ENCODE measurements at regions of chr2 and their contacts with region 1.

Region 1: GRCh38 chr2:214226061-214226460 is 184.8 kb upstream of the VWC2L start:
- DNase-seq: no peak
- ATAC-seq: no peak
- H3K4me3 ChIP-seq: no peak overlapping the region
- H3K27ac ChIP-seq: no peak overlapping the region
- H3K4me1 ChIP-seq: no peaks in the 10 kb centered on the region
- H3K27me3 ChIP-seq: no peaks in the 10 kb centered on the region
- CTCF ChIP-seq: no peak
- EP300 ChIP-seq: no peak
- POLR2A ChIP-seq: no peak
- RAD21 ChIP-seq: no peak

Region 2: GRCh38 chr2:214050731-214051130 is 175.3 kb before region 1 on chr2:
- CTCF ChIA-PET with region 1: no interaction called
- POLR2A ChIA-PET with region 1: no interaction called
- in situ Hi-C with region 1: no loop called
- intact Hi-C with region 1: no loop called
- DNase-seq: no peak
- ATAC-seq: no peak
- H3K4me3 ChIP-seq: no peak overlapping the region
- H3K27ac ChIP-seq: no peak overlapping the region
- H3K4me1 ChIP-seq: no peaks in the 10 kb centered on the region
- H3K27me3 ChIP-seq: no peaks in the 10 kb centered on the region
- CTCF ChIP-seq: no peak
- EP300 ChIP-seq: no peak
- POLR2A ChIP-seq: no peak
- RAD21 ChIP-seq: no peak

Region 3: GRCh38 chr2:214367171-214367570 is 141.1 kb after region 1 on chr2:
- CTCF ChIA-PET with region 1: no interaction called
- POLR2A ChIA-PET with region 1: no interaction called
- in situ Hi-C with region 1: no loop called
- intact Hi-C with region 1: no loop called
- DNase-seq: no peak
- ATAC-seq: no peak
- H3K4me3 ChIP-seq: no peak overlapping the region
- H3K27ac ChIP-seq: no peak overlapping the region
- H3K4me1 ChIP-seq: no peaks in the 10 kb centered on the region
- H3K27me3 ChIP-seq: no peaks in the 10 kb centered on the region
- CTCF ChIP-seq: no peak
- EP300 ChIP-seq: no peak
- POLR2A ChIP-seq: no peak
- RAD21 ChIP-seq: no peak

Region 4: DNA sequence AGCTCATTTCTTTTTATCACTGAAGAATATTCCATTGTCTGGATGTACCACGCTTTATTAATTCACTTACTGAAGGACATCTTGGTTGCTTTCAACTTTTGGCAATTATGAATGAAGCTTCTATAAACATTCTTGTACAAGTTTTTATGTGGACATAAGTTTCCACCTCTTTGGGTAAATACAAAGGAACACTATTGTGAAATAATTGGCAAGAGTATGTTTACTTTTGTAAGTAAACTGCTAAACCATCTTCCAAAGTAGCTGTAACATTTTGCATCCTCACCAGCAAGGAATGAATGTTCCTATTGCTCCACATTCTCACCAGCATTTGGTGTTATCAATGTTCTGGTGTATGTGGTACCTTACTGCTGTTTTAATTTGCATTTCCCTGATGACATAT is 169.0 kb after region 1 on chr2:
- CTCF ChIA-PET with region 1: no interaction called
- POLR2A ChIA-PET with region 1: no interaction called
- in situ Hi-C with region 1: no loop called
- intact Hi-C with region 1: no loop called
- DNase-seq: no peak
- ATAC-seq: no peak
- H3K4me3 ChIP-seq: no peak overlapping the region
- H3K27ac ChIP-seq: no peak overlapping the region
- H3K4me1 ChIP-seq: no peaks in the 10 kb centered on the region
- H3K27me3 ChIP-seq: no peaks in the 10 kb centered on the region
- CTCF ChIP-seq: no peak
- EP300 ChIP-seq: no peak
- POLR2A ChIP-seq: no peak
- RAD21 ChIP-seq: no peak

Region 5: DNA sequence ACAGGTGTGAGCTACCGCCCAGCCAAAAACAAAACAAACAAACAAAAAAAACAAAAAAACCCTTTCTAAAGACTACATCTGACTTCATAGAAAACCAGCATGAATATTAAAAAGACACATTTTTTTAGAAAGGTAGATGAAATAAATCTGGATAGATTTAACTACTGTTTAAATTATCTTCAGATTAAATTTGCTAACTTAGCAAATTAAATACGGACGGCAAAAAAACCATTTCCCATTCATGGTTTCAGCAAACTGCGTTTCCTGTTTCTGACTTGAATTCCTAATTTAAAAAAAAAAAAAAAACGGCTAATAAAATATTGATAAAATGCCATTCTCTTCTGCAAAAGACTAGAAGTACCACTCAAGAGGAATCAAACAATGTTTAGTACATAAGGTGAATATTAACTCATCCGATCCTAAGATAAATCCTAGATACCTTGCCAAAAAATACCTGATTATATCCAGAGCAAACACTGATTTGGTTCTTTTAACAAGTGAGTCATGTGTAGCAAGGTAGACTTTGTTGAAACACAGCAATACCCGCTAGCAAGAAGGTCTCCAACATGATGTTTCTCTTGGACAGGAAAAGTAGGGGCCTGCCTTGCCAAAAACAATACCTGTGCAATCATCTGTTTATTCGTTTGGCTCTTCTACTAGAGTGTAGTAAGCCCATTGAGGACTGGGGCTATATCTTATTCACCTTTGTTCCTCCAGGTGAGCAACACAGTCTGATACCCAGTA is 487.2 kb after region 1 on chr2:
- CTCF ChIA-PET with region 1: no interaction called
- POLR2A ChIA-PET with region 1: no interaction called
- in situ Hi-C with region 1: loop called (anchors 10 kb)
- intact Hi-C with region 1: no loop called
- DNase-seq: no peak
- ATAC-seq: no peak
- H3K4me3 ChIP-seq: no peak overlapping the region
- H3K27ac ChIP-seq: no peak overlapping the region
- H3K4me1 ChIP-seq: no peaks in the 10 kb centered on the region
- H3K27me3 ChIP-seq: no peaks in the 10 kb centered on the region
- CTCF ChIP-seq: no peak
- EP300 ChIP-seq: no peak
- POLR2A ChIP-seq: no peak
- RAD21 ChIP-seq: no peak